Vagina (tissue), 2 donors: ENCODE measurements at regions of chr14 and their contacts with region 1.

Region 1: GRCh38 chr14:99604283-99604765 is 317 bp upstream of the CCDC85C start:
- DNase-seq: peak in 1 of 2 donors; percentile 94
- H3K4me3 ChIP-seq: peak overlapping the region; percentile 83 to 87
- H3K27ac ChIP-seq: peak overlapping the region; percentile 89
- H3K4me1 ChIP-seq: peaks cover 52% of the 10 kb centered on the region
- H3K27me3 ChIP-seq: no peaks in the 10 kb centered on the region
- CTCF ChIP-seq: no peak
- POLR2A ChIP-seq: peak in 1 of 2 donors; percentile 28

Region 2: GRCh38 chr14:99563233-99564129 is 40.8 kb before region 1 on chr14:
- intact Hi-C with region 1: loop called (anchors 5 kb)
- DNase-seq: no peak
- H3K4me3 ChIP-seq: no peak overlapping the region
- H3K27ac ChIP-seq: peak overlapping the region; percentile 46
- H3K4me1 ChIP-seq: peaks cover 77% of the 10 kb centered on the region
- H3K27me3 ChIP-seq: no peaks in the 10 kb centered on the region
- CTCF ChIP-seq: no peak
- POLR2A ChIP-seq: no peak

Region 3: DNA sequence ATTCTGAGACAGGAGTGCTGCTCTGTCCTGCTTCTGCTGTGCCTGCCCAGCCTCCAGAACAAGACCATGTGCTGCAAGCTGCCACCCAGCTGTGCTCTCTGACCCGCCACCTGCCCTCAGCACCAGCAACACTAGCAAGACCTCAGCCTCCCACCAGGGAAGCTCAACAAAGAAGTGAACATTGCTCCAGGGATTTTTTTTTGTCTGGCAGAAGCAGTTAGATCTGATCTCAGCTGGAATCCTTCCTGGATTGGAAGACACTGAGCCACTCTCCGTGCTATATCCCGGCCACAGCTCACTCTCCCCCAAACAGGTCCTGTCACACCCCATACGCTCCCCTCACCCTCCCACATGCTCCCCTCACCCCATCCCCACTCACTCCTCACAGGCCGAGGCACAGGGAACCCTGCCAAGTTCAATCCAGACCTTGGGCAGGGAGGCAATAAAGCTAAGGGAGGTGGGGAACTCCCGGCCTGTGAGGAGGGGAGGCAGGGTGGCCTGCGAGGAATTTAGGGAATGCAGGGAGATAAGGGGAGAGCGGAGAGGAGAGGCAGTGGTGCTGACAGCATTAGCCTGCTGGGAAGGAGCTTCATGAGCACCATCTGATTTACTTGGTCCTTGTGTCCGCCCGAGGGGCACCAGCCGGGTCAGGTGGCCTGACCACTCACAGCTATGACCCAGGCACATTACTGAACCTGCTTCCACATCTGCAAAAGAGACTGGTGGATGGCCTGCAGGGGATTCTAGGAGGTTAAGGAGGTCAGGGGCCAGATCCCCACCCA is 30.0 kb before region 1 on chr14:
- intact Hi-C with region 1: loop called (anchors 1 kb)
- DNase-seq: no peak
- H3K4me3 ChIP-seq: no peak overlapping the region
- H3K27ac ChIP-seq: peak overlapping the region; percentile 42
- H3K4me1 ChIP-seq: peaks cover 86% of the 10 kb centered on the region
- H3K27me3 ChIP-seq: no peaks in the 10 kb centered on the region
- CTCF ChIP-seq: no peak
- POLR2A ChIP-seq: no peak

Region 4: DNA sequence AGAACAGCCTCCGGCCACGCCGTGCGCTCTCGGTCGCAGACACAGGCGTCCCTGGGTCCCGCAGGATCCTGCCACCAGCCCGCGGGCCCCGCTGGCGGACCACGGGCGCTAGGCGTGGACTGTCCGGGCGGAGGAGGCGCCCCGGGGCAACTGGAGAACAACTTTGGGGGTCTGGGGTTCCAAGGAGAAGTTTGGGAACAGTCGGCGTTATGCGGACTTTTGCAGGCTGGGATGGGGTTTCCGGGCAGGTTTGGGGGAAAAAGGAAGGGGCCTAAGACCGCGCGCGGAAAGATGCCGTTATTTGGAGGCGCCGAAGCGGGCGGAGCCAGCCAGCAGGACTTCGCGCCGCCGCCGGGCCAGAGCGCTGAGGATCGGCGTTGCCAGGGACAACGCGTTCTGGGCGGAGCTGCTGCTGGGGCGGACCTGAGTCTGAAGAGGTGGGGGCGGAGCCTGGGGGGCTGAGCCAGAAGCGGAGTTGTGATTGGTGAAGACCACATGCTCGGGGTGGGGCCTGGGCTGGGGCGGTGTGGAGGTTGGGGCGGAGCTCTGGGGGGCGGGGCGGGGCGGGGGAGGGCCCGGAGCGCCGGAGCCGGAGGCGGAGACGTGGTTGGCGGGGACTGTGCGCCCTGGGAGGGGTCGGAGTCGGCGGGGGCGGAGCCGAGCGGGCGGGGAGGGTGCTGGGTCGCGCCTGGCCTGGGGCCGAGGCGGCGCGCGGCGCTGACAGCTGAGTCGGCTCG is 79.5 kb after region 1 on chr14 and contains the start of gene CYP46A1:
- intact Hi-C with region 1: no loop called
- DNase-seq: peak in 1 of 2 donors; percentile 99
- H3K4me3 ChIP-seq: peak within 1 kb of the TSS; percentile 83 to 86
- H3K27ac ChIP-seq: peak within 1 kb of the TSS; percentile 82
- H3K4me1 ChIP-seq: peaks cover 18% of the 10 kb centered on the region
- H3K27me3 ChIP-seq: no peaks in the 10 kb centered on the region
- CTCF ChIP-seq: peak in 1 of 3 experiments; percentile 24
- POLR2A ChIP-seq: no peak
- total RNA-seq, gene CYP46A1: 1.2 TPM